Activated CD4-positive, alpha-beta T cell treated with anti-CD3 and anti-CD28 coated beads, Interleukin-2, amount 10 ng/mL, durations not matched to agents 24 days and 14 days (primary cell): ENCODE measurements at regions of chr4 and their contacts with region 1.

Region 1: GRCh38 chr4:173420324-173420752 is 21.4 kb upstream of the SCRG1 start:
- DNase-seq: no peak
- H3K4me3 Mint-ChIP-seq: no peak overlapping the region
- H3K27ac Mint-ChIP-seq: no peak overlapping the region
- H3K4me1 Mint-ChIP-seq: peaks cover 7% of the 10 kb centered on the region
- H3K27me3 Mint-ChIP-seq: peaks cover 3% of the 10 kb centered on the region

Region 2: DNA sequence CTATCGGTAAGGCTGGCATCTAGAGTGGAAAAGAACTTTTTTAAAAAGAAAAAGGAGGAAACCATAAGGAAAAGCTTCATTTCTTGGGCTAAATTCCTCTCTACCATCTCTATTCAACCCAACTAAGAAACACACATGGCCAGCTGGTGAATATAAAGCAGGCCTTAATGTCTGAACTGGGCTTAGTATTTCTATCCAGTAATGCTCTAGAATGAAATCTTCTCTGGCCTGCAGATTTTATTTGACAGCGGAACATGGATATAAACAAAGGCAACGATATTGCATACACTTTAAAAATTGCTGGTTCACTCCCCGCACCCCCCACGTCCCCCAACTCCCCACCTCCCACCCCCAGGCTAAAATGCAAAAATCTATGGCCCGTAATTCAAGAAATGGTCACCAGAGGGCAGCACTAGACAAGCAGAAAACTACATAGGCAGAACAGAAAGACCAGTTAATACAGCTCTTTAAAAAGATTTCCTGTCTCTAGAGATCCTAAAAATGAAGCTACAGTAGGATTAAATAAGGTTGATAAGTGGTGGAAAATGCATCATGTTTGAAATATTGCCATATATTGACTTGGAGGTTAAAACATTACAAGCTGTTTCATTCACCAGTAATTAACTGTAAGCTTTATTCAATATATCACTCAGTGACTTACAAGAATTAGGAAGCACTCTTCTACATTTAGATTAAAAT is 407.0 kb before region 1 on chr4:
- intact Hi-C with region 1: loop called (anchors 1 kb)
- DNase-seq: peak; percentile 87
- H3K4me3 Mint-ChIP-seq: no peak overlapping the region
- H3K27ac Mint-ChIP-seq: no peak overlapping the region
- H3K4me1 Mint-ChIP-seq: no peaks in the 10 kb centered on the region
- H3K27me3 Mint-ChIP-seq: peaks cover 9% of the 10 kb centered on the region

Region 3: DNA sequence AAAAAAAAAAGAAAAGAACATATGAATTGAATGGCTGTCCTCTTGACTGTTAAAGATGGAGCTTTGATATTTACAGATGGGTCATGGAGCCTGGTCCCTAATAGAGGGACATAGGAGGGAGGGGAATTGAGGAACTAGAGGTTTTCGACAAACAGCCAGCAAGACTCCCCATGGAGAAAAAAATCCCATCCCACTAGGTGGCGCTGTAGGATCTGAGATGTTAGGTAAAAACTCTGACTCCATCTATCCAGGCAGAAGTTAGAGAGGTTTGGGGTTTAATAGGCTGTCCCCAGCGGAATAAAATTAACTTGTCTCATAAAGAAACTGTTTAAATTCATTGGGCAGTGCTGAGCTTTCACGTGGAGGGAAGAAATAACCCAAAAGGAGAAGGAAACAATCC is 132.0 kb before region 1 on chr4:
- intact Hi-C with region 1: loop called (anchors 1 kb)
- DNase-seq: peak; percentile 92
- H3K4me3 Mint-ChIP-seq: peak overlapping the region; percentile 66
- H3K27ac Mint-ChIP-seq: peak overlapping the region; percentile 48
- H3K4me1 Mint-ChIP-seq: peaks cover 16% of the 10 kb centered on the region
- H3K27me3 Mint-ChIP-seq: no peaks in the 10 kb centered on the region

Region 4: DNA sequence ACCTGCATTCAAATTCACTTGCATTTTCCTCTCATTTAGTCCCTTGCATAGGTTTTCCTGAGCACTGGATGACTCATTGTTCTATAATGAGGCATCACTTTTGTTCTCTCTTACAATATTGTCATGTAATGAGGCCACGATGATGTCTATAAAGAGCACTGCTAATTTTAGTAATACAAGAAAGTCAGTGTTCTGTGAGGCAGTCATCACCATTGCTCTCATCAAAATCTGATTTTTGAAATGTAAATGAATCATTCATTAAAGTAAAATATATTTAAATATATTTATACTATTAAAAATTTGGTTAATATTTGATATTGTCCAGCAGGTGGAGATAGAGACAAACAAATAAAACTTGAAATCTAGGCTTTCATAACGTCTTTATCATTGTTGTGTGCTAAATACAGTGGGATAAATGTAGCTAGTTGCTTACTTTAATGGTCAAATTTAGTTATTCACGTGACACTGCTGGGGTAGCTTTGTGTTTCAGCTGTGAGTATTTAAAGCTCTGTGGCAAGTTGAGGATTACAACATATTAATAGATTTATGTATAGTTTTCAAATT is 101.6 kb before region 1 on chr4:
- intact Hi-C with region 1: loop called (anchors 1 kb)
- DNase-seq: no peak
- H3K4me3 Mint-ChIP-seq: no peak overlapping the region
- H3K27ac Mint-ChIP-seq: no peak overlapping the region
- H3K4me1 Mint-ChIP-seq: peaks cover 9% of the 10 kb centered on the region
- H3K27me3 Mint-ChIP-seq: no peaks in the 10 kb centered on the region

Region 5: GRCh38 chr4:173398779-173399415 is 21.4 kb before region 1 on chr4 and contains the start of gene SCRG1:
- intact Hi-C with region 1: no loop called
- DNase-seq: no peak
- H3K4me3 Mint-ChIP-seq: no peak within 1 kb of the TSS
- H3K27ac Mint-ChIP-seq: no peak within 1 kb of the TSS
- H3K4me1 Mint-ChIP-seq: no peaks in the 10 kb centered on the region
- H3K27me3 Mint-ChIP-seq: peaks cover 4% of the 10 kb centered on the region
- total RNA-seq, gene SCRG1: not detected in 2 replicates

Region 6: GRCh38 chr4:173461170-173461569 is 40.8 kb after region 1 on chr4:
- intact Hi-C with region 1: no loop called
- DNase-seq: no peak
- H3K4me3 Mint-ChIP-seq: no peak overlapping the region
- H3K27ac Mint-ChIP-seq: no peak overlapping the region
- H3K4me1 Mint-ChIP-seq: no peaks in the 10 kb centered on the region
- H3K27me3 Mint-ChIP-seq: peaks cover 8% of the 10 kb centered on the region

Region 7: DNA sequence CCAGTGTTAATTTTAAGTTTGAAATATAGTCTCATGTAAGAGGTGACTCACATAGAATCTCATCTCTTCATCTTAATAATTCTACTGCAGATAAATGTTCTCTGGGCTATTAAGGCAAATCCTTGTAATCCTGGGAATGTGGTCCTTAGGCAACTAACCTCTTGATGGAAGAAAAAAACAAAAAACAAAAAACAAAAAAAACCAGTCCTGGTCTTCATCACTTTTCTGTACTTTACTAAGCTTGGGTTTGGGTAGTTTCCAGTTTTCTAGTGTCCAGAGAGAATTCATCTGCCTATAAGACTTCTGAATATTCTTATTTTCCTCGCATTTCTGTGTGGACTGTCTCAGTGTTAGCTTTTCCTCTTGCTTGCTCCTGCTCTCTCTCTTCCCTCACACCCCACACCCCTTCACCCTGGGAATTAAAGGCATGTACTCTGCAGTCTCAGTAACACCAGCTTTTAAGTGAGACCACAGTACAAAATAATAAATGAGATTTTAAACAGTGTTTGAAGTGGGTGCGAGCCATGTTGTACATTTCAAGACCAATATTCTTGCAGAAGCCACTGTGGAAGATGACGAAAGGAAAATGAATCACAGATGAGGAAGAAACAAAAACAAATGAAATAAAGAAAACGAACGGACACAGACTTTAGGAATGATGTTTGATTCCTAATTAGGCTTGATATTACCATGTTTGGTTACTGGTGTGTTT is 58.0 kb after region 1 on chr4:
- intact Hi-C with region 1: no loop called
- DNase-seq: peak; percentile 26
- H3K4me3 Mint-ChIP-seq: no peak overlapping the region
- H3K27ac Mint-ChIP-seq: no peak overlapping the region
- H3K4me1 Mint-ChIP-seq: no peaks in the 10 kb centered on the region
- H3K27me3 Mint-ChIP-seq: peaks cover 6% of the 10 kb centered on the region

Region 8: GRCh38 chr4:173494013-173494970 is 74.0 kb after region 1 on chr4:
- intact Hi-C with region 1: loop called (anchors 1 kb)
- DNase-seq: peak; percentile 90
- H3K4me3 Mint-ChIP-seq: peak overlapping the region; percentile 86
- H3K27ac Mint-ChIP-seq: no peak overlapping the region
- H3K4me1 Mint-ChIP-seq: peaks cover 30% of the 10 kb centered on the region
- H3K27me3 Mint-ChIP-seq: peaks cover 42% of the 10 kb centered on the region